ENCODE measurements at regions of chr10 and their contacts with region 1.

Region 1: DNA sequence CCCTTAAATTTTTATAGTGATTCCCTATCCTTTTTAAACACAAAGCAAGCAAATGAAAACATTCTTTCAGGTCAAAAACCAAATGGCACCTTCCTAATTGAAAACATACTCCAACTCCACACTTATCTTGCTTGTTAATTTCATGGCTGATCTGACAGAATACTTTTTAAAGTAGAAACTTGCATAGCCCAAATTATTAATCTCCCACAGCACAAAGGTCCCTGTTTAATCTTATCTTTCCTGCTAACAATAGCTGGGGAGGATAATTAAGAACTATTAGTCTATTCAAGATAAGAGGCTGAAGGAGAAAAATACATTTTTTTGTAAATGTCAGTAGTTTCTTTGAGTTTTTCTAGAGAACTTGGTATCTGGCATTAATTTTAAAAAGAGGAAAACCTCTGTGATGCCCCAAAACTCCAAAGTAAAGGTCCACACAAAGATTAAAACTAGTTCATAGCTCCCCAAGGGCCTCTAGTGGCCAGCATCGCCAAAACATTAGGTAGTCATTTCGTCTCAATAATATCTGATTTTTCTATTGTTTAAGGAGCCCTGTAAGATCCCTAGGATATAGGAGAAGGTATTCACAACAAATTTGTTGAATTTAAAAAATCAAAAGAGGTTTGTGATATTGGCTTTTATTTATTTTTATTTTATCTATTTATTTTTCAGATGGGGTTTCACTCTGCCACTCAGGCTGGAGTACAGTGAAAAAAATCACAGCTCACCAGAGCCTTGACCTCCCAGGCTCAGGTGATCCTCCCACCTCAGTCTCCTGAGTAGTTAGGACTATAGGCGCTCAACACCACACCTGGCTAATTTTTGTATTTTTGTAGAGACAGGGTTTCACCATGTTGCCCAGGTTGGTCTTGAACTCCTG is 14.7 kb downstream of the CDNF start:
- DNase-seq: peak; percentile 70
- H3K4me3 ChIP-seq: no peak overlapping the region
- H3K27ac ChIP-seq: no peak overlapping the region
- H3K4me1 ChIP-seq: peaks cover 20% of the 10 kb centered on the region
- H3K27me3 ChIP-seq: peaks cover 0 to 3% of the 10 kb centered on the region in 2 experiments
- CTCF ChIP-seq: peak; percentile 59 to 66
- POLR2A ChIP-seq: no peak

Region 2: GRCh38 chr10:14200698-14201544 is 622.2 kb before region 1 on chr10:
- CTCF ChIA-PET with region 1: interaction called, 19 read pairs
- POLR2A ChIA-PET with region 1: no interaction called
- dilution Hi-C with region 1: no loop called
- intact Hi-C with region 1: loop called (anchors 1 kb)
- DNase-seq: no peak
- H3K4me3 ChIP-seq: no peak overlapping the region
- H3K27ac ChIP-seq: no peak overlapping the region
- H3K4me1 ChIP-seq: no peaks in the 10 kb centered on the region
- H3K27me3 ChIP-seq: peaks cover 11 to 14% of the 10 kb centered on the region in 2 experiments
- CTCF ChIP-seq: peak; percentile 11 to 28
- POLR2A ChIP-seq: no peak

Region 3: GRCh38 chr10:14536241-14537213 is 286.6 kb before region 1 on chr10:
- CTCF ChIA-PET with region 1: interaction called, 38 read pairs
- POLR2A ChIA-PET with region 1: no interaction called
- dilution Hi-C with region 1: no loop called
- intact Hi-C with region 1: loop called (anchors 1 kb)
- DNase-seq: peak; percentile 65
- H3K4me3 ChIP-seq: no peak overlapping the region
- H3K27ac ChIP-seq: no peak overlapping the region
- H3K4me1 ChIP-seq: no peaks in the 10 kb centered on the region
- H3K27me3 ChIP-seq: no peaks in the 10 kb centered on the region
- CTCF ChIP-seq: peak; percentile 55 to 59
- POLR2A ChIP-seq: no peak

Region 4: GRCh38 chr10:14578060-14578952 is 244.8 kb before region 1 on chr10:
- CTCF ChIA-PET with region 1: interaction called, 14 read pairs
- POLR2A ChIA-PET with region 1: no interaction called
- dilution Hi-C with region 1: no loop called
- intact Hi-C with region 1: loop called (anchors 1 kb)
- DNase-seq: peak; percentile 100
- H3K4me3 ChIP-seq: peak overlapping the region in 1 of 3 experiments; percentile 42
- H3K27ac ChIP-seq: peak overlapping the region; percentile 97
- H3K4me1 ChIP-seq: peaks cover 78% of the 10 kb centered on the region
- H3K27me3 ChIP-seq: no peaks in the 10 kb centered on the region
- CTCF ChIP-seq: no peak
- POLR2A ChIP-seq: peak; percentile 82

Region 5: GRCh38 chr10:14801723-14802122 is 21.4 kb before region 1 on chr10:
- CTCF ChIA-PET with region 1: interaction called, 11 read pairs
- POLR2A ChIA-PET with region 1: no interaction called
- dilution Hi-C with region 1: no loop called
- intact Hi-C with region 1: no loop called
- DNase-seq: peak; percentile 90
- H3K4me3 ChIP-seq: no peak overlapping the region
- H3K27ac ChIP-seq: no peak overlapping the region
- H3K4me1 ChIP-seq: peaks cover 14% of the 10 kb centered on the region
- H3K27me3 ChIP-seq: no peaks in the 10 kb centered on the region
- CTCF ChIP-seq: peak in 1 of 2 donors; percentile 51
- POLR2A ChIP-seq: no peak

Region 6: DNA sequence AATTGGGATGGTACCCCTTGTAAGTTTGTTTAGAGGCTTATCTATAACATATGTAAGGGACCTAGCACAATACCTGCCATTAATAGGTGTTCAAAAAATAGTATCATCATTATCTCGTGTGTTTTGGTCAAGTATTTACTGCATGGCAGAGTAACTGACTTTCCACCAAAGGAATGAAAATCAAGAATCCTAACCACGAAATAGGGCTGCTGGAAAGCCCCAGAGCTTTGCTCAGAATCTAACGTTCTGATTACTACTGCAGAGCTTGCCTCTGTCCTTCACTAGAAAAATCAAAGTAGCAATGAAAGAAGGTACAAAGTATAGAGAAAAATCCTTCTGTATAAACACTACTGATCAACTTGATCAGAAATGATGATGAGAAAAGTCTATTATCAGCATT is 95.8 kb after region 1 on chr10:
- CTCF ChIA-PET with region 1: no interaction called
- POLR2A ChIA-PET with region 1: no interaction called
- dilution Hi-C with region 1: no loop called
- intact Hi-C with region 1: no loop called
- DNase-seq: no peak
- H3K4me3 ChIP-seq: no peak overlapping the region
- H3K27ac ChIP-seq: no peak overlapping the region
- H3K4me1 ChIP-seq: no peaks in the 10 kb centered on the region
- H3K27me3 ChIP-seq: no peaks in the 10 kb centered on the region
- CTCF ChIP-seq: no peak
- POLR2A ChIP-seq: no peak